B cell (primary cell): ENCODE measurements at regions of chr6 and their contacts with region 1.

Region 1: GRCh38 chr6:116279260-116280063 is at the start of gene TSPYL1:
- DNase-seq: peak; percentile 98
- ATAC-seq: peak; percentile 88
- H3K4me3 ChIP-seq: peak within 1 kb of the TSS; percentile 89 to 96 (median 94)
- H3K4me3 Mint-ChIP-seq: peak within 1 kb of the TSS; percentile 97
- H3K27ac ChIP-seq: peak within 1 kb of the TSS; percentile 99
- H3K27ac Mint-ChIP-seq: peak within 1 kb of the TSS; percentile 100
- H3K4me1 ChIP-seq: peaks cover 41 to 48% of the 10 kb centered on the region in 2 donors
- H3K4me1 Mint-ChIP-seq: peaks cover 60% of the 10 kb centered on the region
- H3K27me3 ChIP-seq: no peaks in the 10 kb centered on the region
- H3K27me3 Mint-ChIP-seq: no peaks in the 10 kb centered on the region
- CTCF ChIP-seq: no peak
- total RNA-seq, gene TSPYL1: 98.9 and 101 TPM in 2 replicates

Region 2: GRCh38 chr6:116253505-116254296 is 25.8 kb before region 1 on chr6 and contains the start of gene TSPYL4:
- CTCF ChIA-PET with region 1: interaction called, 5 read pairs
- POLR2A ChIA-PET with region 1: interaction called, 7 read pairs
- intact Hi-C with region 1: loop called (anchors 1 kb)
- DNase-seq: peak; percentile 95
- ATAC-seq: peak; percentile 99
- H3K4me3 ChIP-seq: peak within 1 kb of the TSS; percentile 85 to 99 (median 98)
- H3K4me3 Mint-ChIP-seq: no peak within 1 kb of the TSS
- H3K27ac ChIP-seq: peak within 1 kb of the TSS; percentile 94 to 98
- H3K27ac Mint-ChIP-seq: no peak within 1 kb of the TSS
- H3K4me1 ChIP-seq: peaks cover 31 to 36% of the 10 kb centered on the region in 2 donors
- H3K4me1 Mint-ChIP-seq: peaks cover 35% of the 10 kb centered on the region
- H3K27me3 ChIP-seq: no peaks in the 10 kb centered on the region
- H3K27me3 Mint-ChIP-seq: no peaks in the 10 kb centered on the region
- CTCF ChIP-seq: no peak
- total RNA-seq, gene TSPYL4: 20.5 and 20.6 TPM in 2 replicates

Region 3: DNA sequence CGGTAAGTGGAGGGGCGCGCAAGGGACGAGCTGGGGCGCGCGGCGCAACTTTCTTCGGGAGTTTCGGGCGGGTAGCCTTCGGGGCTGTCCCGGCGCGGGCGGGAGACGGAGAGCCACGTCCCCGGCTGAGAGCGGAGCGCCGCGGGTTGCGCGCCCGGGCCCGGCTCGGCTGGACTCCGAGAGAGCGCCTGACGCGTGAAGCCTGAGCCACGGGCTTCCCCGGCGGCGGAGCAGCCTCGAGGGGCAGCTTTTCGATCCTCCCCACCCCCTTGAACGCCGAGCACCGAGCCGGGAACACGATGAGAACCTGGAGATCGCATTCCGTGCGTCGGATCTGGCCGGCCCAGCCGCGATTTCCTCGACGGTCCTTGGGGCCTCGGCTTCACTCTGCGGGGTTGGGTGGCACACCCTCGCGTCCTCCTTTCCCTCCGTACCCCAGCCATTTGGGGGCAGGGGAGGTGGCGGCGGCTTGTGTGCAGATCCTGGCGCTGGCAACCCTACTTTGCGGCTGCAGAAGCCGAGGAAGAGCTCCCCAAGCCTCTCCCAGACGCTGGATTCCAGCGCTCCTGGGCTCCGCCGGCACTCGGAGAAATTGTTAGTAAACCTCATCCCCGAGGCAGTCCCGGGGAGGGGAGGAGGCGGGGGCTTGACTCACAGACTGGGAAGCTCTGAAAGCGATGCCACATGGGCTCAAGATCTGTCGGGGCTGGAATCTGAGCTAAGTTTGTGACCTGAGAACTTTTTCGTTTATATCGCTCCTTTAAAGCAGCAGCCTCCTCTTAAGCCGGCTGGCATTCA is 91.9 kb after region 1 on chr6:
- CTCF ChIA-PET with region 1: interaction called, 3 read pairs
- POLR2A ChIA-PET with region 1: no interaction called
- intact Hi-C with region 1: loop called (anchors 5 kb)
- DNase-seq: no peak
- ATAC-seq: peak; percentile 37
- H3K4me3 ChIP-seq: peak overlapping the region; percentile 62 to 89 (median 85)
- H3K4me3 Mint-ChIP-seq: peak overlapping the region; percentile 92
- H3K27ac ChIP-seq: peak overlapping the region in 1 of 2 donors; percentile 91
- H3K27ac Mint-ChIP-seq: peak overlapping the region; percentile 85
- H3K4me1 ChIP-seq: peaks cover 28 to 30% of the 10 kb centered on the region in 2 donors
- H3K4me1 Mint-ChIP-seq: peaks cover 30% of the 10 kb centered on the region
- H3K27me3 ChIP-seq: peaks cover 0 to 2% (median 0%) of the 10 kb centered on the region in 4 experiments
- H3K27me3 Mint-ChIP-seq: peaks cover 10% of the 10 kb centered on the region
- CTCF ChIP-seq: no peak

Region 4: GRCh38 chr6:116570856-116571682 is 291.6 kb after region 1 on chr6 and contains the start of gene RWDD1:
- CTCF ChIA-PET with region 1: interaction called, 16 read pairs
- POLR2A ChIA-PET with region 1: interaction called, 17 read pairs
- intact Hi-C with region 1: loop called (anchors 1 kb)
- DNase-seq: peak; percentile 99
- ATAC-seq: peak; percentile 93
- H3K4me3 ChIP-seq: peak within 1 kb of the TSS; percentile 81 to 93 (median 83)
- H3K4me3 Mint-ChIP-seq: peak within 1 kb of the TSS; percentile 97
- H3K27ac ChIP-seq: peak within 1 kb of the TSS; percentile 93 to 96
- H3K27ac Mint-ChIP-seq: peak within 1 kb of the TSS; percentile 97
- H3K4me1 ChIP-seq: peaks cover 24% of the 10 kb centered on the region in 2 donors
- H3K4me1 Mint-ChIP-seq: peaks cover 40% of the 10 kb centered on the region
- H3K27me3 ChIP-seq: no peaks in the 10 kb centered on the region
- H3K27me3 Mint-ChIP-seq: no peaks in the 10 kb centered on the region
- CTCF ChIP-seq: no peak
- total RNA-seq, gene RWDD1: 21.8 and 22.4 TPM in 2 replicates

Region 5: GRCh38 chr6:116680975-116681808 is 401.7 kb after region 1 on chr6 and contains the start of gene KPNA5:
- CTCF ChIA-PET with region 1: no interaction called
- POLR2A ChIA-PET with region 1: interaction called, 3 read pairs
- intact Hi-C with region 1: loop called (anchors 5 kb)
- DNase-seq: peak; percentile 95
- ATAC-seq: peak; percentile 93
- H3K4me3 ChIP-seq: peak within 1 kb of the TSS; percentile 69 to 89 (median 84)
- H3K4me3 Mint-ChIP-seq: peak within 1 kb of the TSS; percentile 99
- H3K27ac ChIP-seq: peak within 1 kb of the TSS; percentile 83 to 88
- H3K27ac Mint-ChIP-seq: peak within 1 kb of the TSS; percentile 99
- H3K4me1 ChIP-seq: peaks cover 9 to 20% of the 10 kb centered on the region in 2 donors
- H3K4me1 Mint-ChIP-seq: peaks cover 45% of the 10 kb centered on the region
- H3K27me3 ChIP-seq: no peaks in the 10 kb centered on the region
- H3K27me3 Mint-ChIP-seq: no peaks in the 10 kb centered on the region
- CTCF ChIP-seq: no peak
- total RNA-seq, gene KPNA5: 41.7 and 42.9 TPM in 2 replicates